Thyroid gland (tissue), 4 donors: ENCODE measurements at regions of chr7 and their contacts with region 1.

Region 1: GRCh38 chr7:16801111-16801542 is 3.7 kb downstream of the AGR2 start:
- DNase-seq: no peak
- H3K4me3 ChIP-seq: no peak overlapping the region
- H3K27ac ChIP-seq: no peak overlapping the region
- H3K4me1 ChIP-seq: peaks cover 0 to 9% of the 10 kb centered on the region in 2 donors
- H3K27me3 ChIP-seq: no peaks in the 10 kb centered on the region
- CTCF ChIP-seq: peak in 4 of 6 experiments; percentile 12 to 52 (median 40)
- POLR2A ChIP-seq: no peak

Region 2: GRCh38 chr7:16904076-16904475 is 102.9 kb after region 1 on chr7:
- intact Hi-C with region 1: no loop called
- DNase-seq: no peak
- H3K4me3 ChIP-seq: no peak overlapping the region
- H3K27ac ChIP-seq: peak overlapping the region in 2 of 3 donors; percentile 45 to 57
- H3K4me1 ChIP-seq: peaks cover 10 to 13% of the 10 kb centered on the region in 2 donors
- H3K27me3 ChIP-seq: no peaks in the 10 kb centered on the region
- CTCF ChIP-seq: no peak
- POLR2A ChIP-seq: no peak

Region 3: DNA sequence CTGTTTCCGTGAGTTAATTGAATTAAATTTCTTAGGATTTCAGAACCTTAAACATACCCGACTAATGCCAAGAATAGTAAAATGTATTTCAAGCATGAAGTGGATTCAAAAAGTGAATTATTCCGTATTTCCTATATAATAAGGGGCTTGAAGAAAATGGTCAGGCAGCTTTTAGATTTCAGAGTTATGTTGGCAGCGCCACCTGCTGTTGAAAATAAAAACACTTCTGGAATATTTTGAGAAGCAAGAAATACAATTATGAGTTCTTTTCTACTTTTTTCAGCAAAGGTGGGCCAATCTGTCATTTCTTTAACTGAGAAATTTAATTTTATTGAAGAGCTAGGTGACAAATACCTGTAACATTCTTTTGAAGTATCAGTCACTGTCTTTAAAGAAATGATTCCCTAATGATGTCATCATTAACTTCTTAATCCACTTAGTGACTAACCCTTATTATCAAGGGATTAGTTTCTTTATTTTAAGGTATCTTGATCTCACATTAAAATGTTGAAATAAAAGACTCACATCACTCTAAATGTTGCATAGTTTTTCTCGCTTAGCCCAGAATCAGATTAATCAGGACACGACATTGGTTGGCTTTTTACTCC is 117.3 kb after region 1 on chr7:
- intact Hi-C with region 1: loop called (anchors 10 kb)
- DNase-seq: peak in 1 of 2 donors; percentile 22
- H3K4me3 ChIP-seq: no peak overlapping the region
- H3K27ac ChIP-seq: no peak overlapping the region
- H3K4me1 ChIP-seq: peaks cover 6 to 11% of the 10 kb centered on the region in 2 donors
- H3K27me3 ChIP-seq: no peaks in the 10 kb centered on the region
- CTCF ChIP-seq: peak; percentile 38 to 74 (median 69)
- POLR2A ChIP-seq: no peak

Region 4: GRCh38 chr7:17063045-17063383 is 261.9 kb after region 1 on chr7:
- intact Hi-C with region 1: no loop called
- DNase-seq: no peak
- H3K4me3 ChIP-seq: no peak overlapping the region
- H3K27ac ChIP-seq: no peak overlapping the region
- H3K4me1 ChIP-seq: no peaks in the 10 kb centered on the region
- H3K27me3 ChIP-seq: no peaks in the 10 kb centered on the region
- CTCF ChIP-seq: no peak
- POLR2A ChIP-seq: no peak